ENCODE measurements at regions of chr5 and their contacts with region 1.

Region 1: GRCh38 chr5:142748568-142749249 is 21.5 kb upstream of the ARHGAP26 start:
- DNase-seq: peak in 4 of 5 donors; percentile 40 to 49 (median 45)
- H3K4me3 ChIP-seq: no peak overlapping the region
- H3K4me3 Mint-ChIP-seq: no peak overlapping the region
- H3K27ac ChIP-seq: no peak overlapping the region
- H3K27ac Mint-ChIP-seq: no peak overlapping the region
- H3K4me1 ChIP-seq: no peaks in the 10 kb centered on the region
- H3K4me1 Mint-ChIP-seq: peaks cover 0 to 11% (median 0%) of the 10 kb centered on the region in 4 donors
- H3K27me3 ChIP-seq: no peaks in the 10 kb centered on the region
- H3K27me3 Mint-ChIP-seq: peaks cover 0 to 6% of the 10 kb centered on the region in 2 donors

Region 2: GRCh38 chr5:142737179-142737578 is 11.5 kb before region 1 on chr5:
- CTCF ChIA-PET with region 1: interaction called, 21 read pairs
- POLR2A ChIA-PET with region 1: interaction called, 3 read pairs
- intact Hi-C with region 1: no loop called
- DNase-seq: no peak
- H3K4me3 ChIP-seq: no peak overlapping the region
- H3K4me3 Mint-ChIP-seq: no peak overlapping the region
- H3K27ac ChIP-seq: no peak overlapping the region
- H3K27ac Mint-ChIP-seq: no peak overlapping the region
- H3K4me1 ChIP-seq: peaks cover 28% of the 10 kb centered on the region
- H3K4me1 Mint-ChIP-seq: peaks cover 18 to 46% (median 29%) of the 10 kb centered on the region in 4 donors
- H3K27me3 ChIP-seq: no peaks in the 10 kb centered on the region
- H3K27me3 Mint-ChIP-seq: peaks cover 0 to 1% of the 10 kb centered on the region in 2 donors

Region 3: GRCh38 chr5:142800776-142801494 is 52.2 kb after region 1 on chr5:
- CTCF ChIA-PET with region 1: interaction called, 13 read pairs
- POLR2A ChIA-PET with region 1: interaction called, 6 read pairs
- intact Hi-C with region 1: no loop called
- DNase-seq: peak; percentile 47 to 58 (median 54)
- H3K4me3 ChIP-seq: no peak overlapping the region
- H3K4me3 Mint-ChIP-seq: peak overlapping the region; percentile 27 to 83 (median 74)
- H3K27ac ChIP-seq: peak overlapping the region; percentile 6
- H3K27ac Mint-ChIP-seq: peak overlapping the region; percentile 71 to 96 (median 93)
- H3K4me1 ChIP-seq: peaks cover 51% of the 10 kb centered on the region
- H3K4me1 Mint-ChIP-seq: peaks cover 36 to 64% (median 50%) of the 10 kb centered on the region in 4 donors
- H3K27me3 ChIP-seq: no peaks in the 10 kb centered on the region
- H3K27me3 Mint-ChIP-seq: no peaks in the 10 kb centered on the region

Region 4: GRCh38 chr5:142862594-142862993 is 113.9 kb after region 1 on chr5:
- CTCF ChIA-PET with region 1: interaction called, 154 read pairs
- POLR2A ChIA-PET with region 1: interaction called, 3 read pairs
- intact Hi-C with region 1: loop called (anchors 1 kb)
- DNase-seq: no peak
- H3K4me3 ChIP-seq: no peak overlapping the region
- H3K4me3 Mint-ChIP-seq: no peak overlapping the region
- H3K27ac ChIP-seq: no peak overlapping the region
- H3K27ac Mint-ChIP-seq: no peak overlapping the region
- H3K4me1 ChIP-seq: peaks cover 6% of the 10 kb centered on the region
- H3K4me1 Mint-ChIP-seq: peaks cover 20 to 46% (median 29%) of the 10 kb centered on the region in 4 donors
- H3K27me3 ChIP-seq: no peaks in the 10 kb centered on the region
- H3K27me3 Mint-ChIP-seq: no peaks in the 10 kb centered on the region

Region 5: DNA sequence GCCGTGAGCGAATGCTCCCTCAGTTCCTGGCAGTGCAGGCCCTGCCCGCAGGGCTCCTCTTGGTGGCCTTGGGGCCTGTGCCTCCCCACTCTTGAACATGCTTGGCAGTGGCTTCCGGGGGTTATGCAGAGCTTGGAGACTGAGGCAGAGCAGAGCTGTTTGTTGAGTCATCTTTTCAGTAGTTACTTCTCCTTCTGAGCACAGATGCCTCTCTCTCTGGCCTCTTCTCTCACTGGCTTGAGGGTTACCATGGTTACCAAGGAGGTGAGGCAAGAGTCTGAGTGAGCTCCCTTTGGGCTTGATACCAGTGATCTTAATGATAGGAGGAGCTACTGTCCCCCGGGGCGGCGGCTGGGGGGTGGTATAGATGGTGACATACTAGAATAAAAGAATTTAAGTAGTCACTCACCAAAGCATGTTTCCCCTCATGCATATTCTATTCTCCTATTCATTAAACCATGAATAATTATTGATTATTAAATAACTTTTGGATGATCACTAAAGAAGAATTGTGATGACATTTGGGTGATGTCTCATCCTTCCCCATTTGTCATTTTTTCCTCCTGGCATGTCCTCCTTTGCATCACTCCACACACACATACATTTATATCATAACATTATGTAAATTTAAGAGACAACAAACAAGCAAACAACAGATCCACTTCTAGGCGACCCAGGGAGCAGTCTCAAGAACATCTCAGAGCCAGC is 132.5 kb after region 1 on chr5:
- CTCF ChIA-PET with region 1: interaction called, 354 read pairs
- POLR2A ChIA-PET with region 1: interaction called, 3 read pairs
- intact Hi-C with region 1: loop called (anchors 1 kb)
- DNase-seq: no peak
- H3K4me3 ChIP-seq: no peak overlapping the region
- H3K4me3 Mint-ChIP-seq: no peak overlapping the region
- H3K27ac ChIP-seq: no peak overlapping the region
- H3K27ac Mint-ChIP-seq: peak overlapping the region in 1 of 7 donors; percentile 25
- H3K4me1 ChIP-seq: no peaks in the 10 kb centered on the region
- H3K4me1 Mint-ChIP-seq: peaks cover 0 to 3% (median 1%) of the 10 kb centered on the region in 4 donors
- H3K27me3 ChIP-seq: no peaks in the 10 kb centered on the region
- H3K27me3 Mint-ChIP-seq: no peaks in the 10 kb centered on the region

Region 6: DNA sequence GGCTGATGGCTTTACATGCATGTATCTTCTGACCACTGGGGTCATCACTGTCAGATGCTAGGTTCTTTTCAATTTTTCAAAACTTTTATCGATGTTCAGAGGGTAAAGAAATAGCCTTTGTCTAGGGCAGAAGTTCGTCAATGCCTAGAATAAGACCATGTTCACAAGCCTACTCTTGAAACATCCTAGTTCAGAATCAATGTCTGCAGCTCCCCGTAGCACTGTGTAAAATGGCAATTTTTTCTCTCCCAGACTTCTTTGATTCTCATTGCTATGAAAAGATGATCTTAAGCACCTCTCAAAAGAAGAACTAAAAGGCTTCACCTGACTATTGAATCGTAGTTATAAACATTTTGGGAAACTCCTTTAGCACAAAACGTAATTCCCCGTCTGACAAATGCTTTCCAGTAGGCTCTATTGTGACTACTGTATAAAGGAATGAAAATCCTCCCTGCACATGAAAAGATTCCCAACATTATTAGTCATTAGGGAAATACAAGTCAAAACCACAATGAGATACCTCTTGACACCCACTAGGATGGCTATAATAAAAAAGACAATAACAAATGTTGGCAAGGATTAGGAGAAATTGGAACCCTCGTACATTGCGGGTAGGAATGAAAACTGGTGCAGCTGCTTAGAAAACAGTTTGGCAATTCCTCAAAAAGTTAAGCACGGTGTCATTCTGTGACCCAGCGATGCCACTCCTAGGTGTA is 285.0 kb after region 1 on chr5:
- CTCF ChIA-PET with region 1: no interaction called
- POLR2A ChIA-PET with region 1: no interaction called
- intact Hi-C with region 1: no loop called
- DNase-seq: no peak
- H3K4me3 ChIP-seq: no peak overlapping the region
- H3K4me3 Mint-ChIP-seq: no peak overlapping the region
- H3K27ac ChIP-seq: no peak overlapping the region
- H3K27ac Mint-ChIP-seq: no peak overlapping the region
- H3K4me1 ChIP-seq: peaks cover 27% of the 10 kb centered on the region
- H3K4me1 Mint-ChIP-seq: peaks cover 19 to 40% (median 24%) of the 10 kb centered on the region in 4 donors
- H3K27me3 ChIP-seq: no peaks in the 10 kb centered on the region
- H3K27me3 Mint-ChIP-seq: no peaks in the 10 kb centered on the region

Region 7: DNA sequence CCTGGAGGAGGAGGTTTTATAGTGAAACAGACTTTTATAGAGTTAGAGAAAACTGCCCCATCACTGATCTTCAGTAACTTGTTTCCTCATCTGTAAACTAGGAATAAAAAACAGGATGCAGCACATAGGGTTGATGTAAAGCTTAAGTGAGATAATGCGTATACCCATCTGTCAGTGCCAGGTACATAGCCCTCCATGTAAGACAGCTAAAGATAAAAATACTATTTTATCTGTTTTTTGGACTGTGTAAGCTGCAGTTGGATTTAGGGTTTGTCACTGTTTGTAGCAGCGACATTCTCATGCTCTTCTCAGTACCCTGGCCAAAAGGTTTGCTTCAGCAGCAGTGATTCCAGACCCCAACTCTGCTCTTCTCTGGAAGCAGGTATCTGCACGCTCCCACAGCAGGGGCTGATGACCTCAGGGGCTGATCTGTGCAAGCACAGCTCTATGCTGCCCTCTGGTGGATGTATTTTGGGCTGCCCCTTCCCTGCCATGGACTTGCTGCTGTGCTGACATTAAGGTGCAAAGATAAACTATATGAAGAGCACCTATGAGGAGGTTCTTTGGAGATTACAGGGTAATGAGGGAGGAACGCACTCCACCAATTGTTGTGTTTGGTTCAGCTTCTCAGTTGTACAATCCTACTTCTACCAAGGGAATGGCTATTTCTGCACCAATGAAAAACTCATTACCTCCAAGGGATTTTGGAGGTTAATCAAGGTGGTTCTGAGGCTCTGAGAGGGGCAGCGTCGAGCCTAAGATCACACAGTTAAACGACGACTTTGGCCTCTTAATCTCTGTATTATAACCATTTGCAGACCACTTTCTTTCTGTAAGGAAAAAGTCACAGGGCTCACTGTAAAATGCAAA is 1076.4 kb after region 1 on chr5:
- CTCF ChIA-PET with region 1: interaction called, 3 read pairs
- POLR2A ChIA-PET with region 1: no interaction called
- intact Hi-C with region 1: loop called (anchors 1 kb)
- DNase-seq: peak; percentile 72 to 80 (median 75)
- H3K4me3 ChIP-seq: no peak overlapping the region
- H3K4me3 Mint-ChIP-seq: no peak overlapping the region
- H3K27ac ChIP-seq: no peak overlapping the region
- H3K27ac Mint-ChIP-seq: no peak overlapping the region
- H3K4me1 ChIP-seq: peaks cover 27% of the 10 kb centered on the region
- H3K4me1 Mint-ChIP-seq: peaks cover 16 to 19% (median 17%) of the 10 kb centered on the region in 4 donors
- H3K27me3 ChIP-seq: no peaks in the 10 kb centered on the region
- H3K27me3 Mint-ChIP-seq: peaks cover 0 to 2% of the 10 kb centered on the region in 2 donors

Measured in CD4-positive, alpha-beta memory T cell (primary cell).